ENCODE measurements at regions of chr4 and their contacts with region 1.

Region 1: DNA sequence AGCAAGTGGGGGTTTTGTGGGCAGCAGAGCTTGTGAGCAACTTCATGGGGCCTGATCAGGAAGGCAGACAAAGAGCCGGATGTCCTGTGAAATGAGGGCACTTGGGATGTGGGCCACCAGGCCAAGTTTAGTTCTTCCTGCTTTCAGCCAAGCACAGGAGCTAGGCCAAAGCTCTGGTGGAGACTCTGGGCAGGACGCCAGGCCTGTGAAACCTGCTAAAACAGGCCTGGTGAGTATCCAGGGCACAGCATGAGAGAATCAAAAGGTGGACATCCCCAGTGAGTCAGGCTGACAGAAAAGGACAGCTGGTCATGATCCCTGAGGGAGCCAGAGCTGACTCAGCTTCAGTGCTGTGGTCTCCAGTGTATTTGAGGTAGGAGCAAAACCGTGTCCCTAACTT is 95.7 kb downstream of the NPNT start:
- DNase-seq: peak; percentile 88 to 91
- ATAC-seq: peak; percentile 77
- H3K4me3 ChIP-seq: no peak overlapping the region
- H3K27ac ChIP-seq: peak overlapping the region in 1 of 2 donors; percentile 5
- H3K4me1 ChIP-seq: peaks cover 4 to 8% of the 10 kb centered on the region in 2 donors
- H3K27me3 ChIP-seq: no peaks in the 10 kb centered on the region

Region 2: GRCh38 chr4:105560421-105560848 is 430.5 kb before region 1 on chr4:
- intact Hi-C with region 1: no loop called
- DNase-seq: no peak
- ATAC-seq: no peak
- H3K4me3 ChIP-seq: no peak overlapping the region
- H3K27ac ChIP-seq: no peak overlapping the region
- H3K4me1 ChIP-seq: no peaks in the 10 kb centered on the region
- H3K27me3 ChIP-seq: no peaks in the 10 kb centered on the region

Region 3: DNA sequence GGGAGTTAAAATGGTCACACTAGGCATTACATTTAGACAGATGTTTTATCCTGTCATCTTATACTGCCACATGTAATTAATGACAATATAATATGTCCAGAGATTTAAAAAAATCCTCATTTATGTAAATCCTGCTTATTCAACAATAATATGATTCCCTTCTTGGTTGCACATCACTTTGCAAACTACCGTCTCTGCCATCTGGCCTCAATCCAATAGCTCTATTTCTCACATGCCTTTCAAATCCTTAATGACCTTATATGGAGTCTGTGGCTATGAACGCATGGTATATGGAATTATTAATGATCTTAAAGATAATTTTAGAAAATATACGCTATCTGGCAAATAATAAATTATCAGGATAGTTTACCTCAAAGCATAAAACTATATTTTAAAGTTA is 48.9 kb after region 1 on chr4:
- intact Hi-C with region 1: loop called in 1 of 2 experiments (anchors 5 kb)
- DNase-seq: no peak
- ATAC-seq: no peak
- H3K4me3 ChIP-seq: no peak overlapping the region
- H3K27ac ChIP-seq: no peak overlapping the region
- H3K4me1 ChIP-seq: peaks cover 0 to under 1% of the 10 kb centered on the region in 2 donors
- H3K27me3 ChIP-seq: no peaks in the 10 kb centered on the region

Measured in aorta (tissue), 5 donors.